Heart left ventricle (tissue), 16 donors: ENCODE measurements at regions of chr18 and their contacts with region 1.

Region 1: GRCh38 chr18:21612125-21612991 is at the start of gene SNRPD1:
- DNase-seq: peak; percentile 86 to 93 (median 91)
- ATAC-seq: peak; percentile 98 to 100 (median 100)
- H3K4me3 ChIP-seq: peak within 1 kb of the TSS; percentile 60 to 92 (median 72)
- H3K27ac ChIP-seq: peak within 1 kb of the TSS; percentile 30 to 93 (median 80)
- H3K4me1 ChIP-seq: peaks cover 2 to 34% (median 14%) of the 10 kb centered on the region in 12 donors
- H3K27me3 ChIP-seq: no peaks in the 10 kb centered on the region
- CTCF ChIP-seq: peak; percentile 85 to 100 (median 96)
- POLR2A ChIP-seq: peak in 1 of 2 donors; percentile 35
- total RNA-seq, gene SNRPD1: 2.5 to 31.0 (median 20.9) TPM

Region 2: GRCh38 chr18:21672521-21673267 is 60.3 kb after region 1 on chr18:
- intact Hi-C with region 1: loop called in 1 of 10 experiments (anchors 5 kb)
- DNase-seq: peak in 4 of 5 donors; percentile 23 to 69 (median 34)
- ATAC-seq: peak; percentile 77 to 95 (median 88)
- H3K4me3 ChIP-seq: no peak overlapping the region
- H3K27ac ChIP-seq: peak overlapping the region in 8 of 12 donors; percentile 10 to 60 (median 52)
- H3K4me1 ChIP-seq: peaks cover 0 to 10% (median 0%) of the 10 kb centered on the region in 12 donors
- H3K27me3 ChIP-seq: no peaks in the 10 kb centered on the region
- CTCF ChIP-seq: peak in 1 of 12 donors; percentile 8
- POLR2A ChIP-seq: no peak

Region 3: DNA sequence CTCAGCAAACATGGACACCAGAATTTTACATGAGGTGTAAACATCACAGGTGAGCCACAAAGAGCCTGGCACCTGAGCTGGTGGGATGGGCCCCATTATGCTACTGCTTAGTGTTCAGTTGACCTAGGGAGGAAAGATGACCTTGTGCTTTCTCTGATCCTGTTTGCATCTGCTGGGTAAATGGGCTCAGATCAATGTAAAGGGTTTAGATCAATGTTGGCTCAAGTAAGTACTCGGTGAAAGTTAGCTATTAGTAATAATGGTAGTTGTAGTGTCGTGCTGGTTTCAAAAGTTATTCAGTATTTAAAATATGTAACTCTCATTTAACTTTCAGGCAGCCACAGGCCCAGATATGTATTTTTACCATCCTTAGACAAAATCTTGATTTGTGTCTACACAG is 72.4 kb after region 1 on chr18:
- intact Hi-C with region 1: no loop called
- DNase-seq: no peak
- ATAC-seq: no peak
- H3K4me3 ChIP-seq: no peak overlapping the region
- H3K27ac ChIP-seq: peak overlapping the region in 1 of 12 donors; percentile 52
- H3K4me1 ChIP-seq: peaks cover 0 to 32% (median 4%) of the 10 kb centered on the region in 12 donors
- H3K27me3 ChIP-seq: no peaks in the 10 kb centered on the region
- CTCF ChIP-seq: no peak
- POLR2A ChIP-seq: no peak

Region 4: GRCh38 chr18:21704603-21705364 is 92.4 kb after region 1 on chr18 and contains the start of gene ABHD3:
- intact Hi-C with region 1: loop called in 5 of 10 experiments (anchors 1 to 10 kb)
- DNase-seq: peak; percentile 94 to 97 (median 95)
- ATAC-seq: peak; percentile 99 to 100 (median 100)
- H3K4me3 ChIP-seq: peak within 1 kb of the TSS; percentile 46 to 99 (median 88)
- H3K27ac ChIP-seq: peak within 1 kb of the TSS; percentile 45 to 97 (median 92)
- H3K4me1 ChIP-seq: peaks cover 0 to 21% (median 7%) of the 10 kb centered on the region in 12 donors
- H3K27me3 ChIP-seq: no peaks in the 10 kb centered on the region
- CTCF ChIP-seq: peak in 11 of 12 donors; percentile 17 to 63 (median 48)
- POLR2A ChIP-seq: peak; percentile 70 to 97
- total RNA-seq, gene ABHD3: 2.1 to 15.6 (median 3.8) TPM

Region 5: GRCh38 chr18:21740724-21741510 is 128.6 kb after region 1 on chr18 and contains the start of gene MIB1:
- intact Hi-C with region 1: loop called in 3 of 10 experiments (anchors 5 to 10 kb)
- DNase-seq: peak; percentile 67 to 100 (median 73)
- ATAC-seq: peak; percentile 76 to 88 (median 86)
- H3K4me3 ChIP-seq: peak within 1 kb of the TSS; percentile 71 to 96 (median 89)
- H3K27ac ChIP-seq: peak within 1 kb of the TSS; percentile 96 to 99 (median 98)
- H3K4me1 ChIP-seq: peaks cover 0 to 38% (median 18%) of the 10 kb centered on the region in 12 donors
- H3K27me3 ChIP-seq: no peaks in the 10 kb centered on the region
- CTCF ChIP-seq: no peak
- POLR2A ChIP-seq: peak in 1 of 2 donors; percentile 74
- total RNA-seq, gene MIB1: 15.3 to 33.4 (median 24.0) TPM

Region 6: GRCh38 chr18:21851327-21851972 is 239.1 kb after region 1 on chr18:
- intact Hi-C with region 1: loop called in 1 of 10 experiments (anchors 10 kb)
- DNase-seq: no peak
- ATAC-seq: peak in 2 of 4 donors; percentile 45 to 63
- H3K4me3 ChIP-seq: no peak overlapping the region
- H3K27ac ChIP-seq: no peak overlapping the region
- H3K4me1 ChIP-seq: peaks cover 0 to 15% (median 0%) of the 10 kb centered on the region in 12 donors
- H3K27me3 ChIP-seq: no peaks in the 10 kb centered on the region
- CTCF ChIP-seq: peak; percentile 25 to 66 (median 44)
- POLR2A ChIP-seq: no peak